CD8-positive, alpha-beta T cell (primary cell): ENCODE measurements at regions of chr2 and their contacts with region 1.

Region 1: GRCh38 chr2:157032017-157032416 is 225.5 kb upstream of the GALNT5 start:
- DNase-seq: no peak
- ATAC-seq: no peak
- H3K4me3 ChIP-seq: no peak overlapping the region
- H3K4me3 Mint-ChIP-seq: no peak overlapping the region
- H3K27ac ChIP-seq: no peak overlapping the region
- H3K27ac Mint-ChIP-seq: no peak overlapping the region
- H3K4me1 ChIP-seq: no peaks in the 10 kb centered on the region
- H3K4me1 Mint-ChIP-seq: no peaks in the 10 kb centered on the region
- H3K27me3 ChIP-seq: no peaks in the 10 kb centered on the region
- H3K27me3 Mint-ChIP-seq: no peaks in the 10 kb centered on the region
- CTCF ChIP-seq: no peak

Region 2: GRCh38 chr2:156826341-156826933 is 205.6 kb before region 1 on chr2:
- CTCF ChIA-PET with region 1: no interaction called
- POLR2A ChIA-PET with region 1: no interaction called
- intact Hi-C with region 1: no loop called
- DNase-seq: no peak
- ATAC-seq: no peak
- H3K4me3 ChIP-seq: no peak overlapping the region
- H3K4me3 Mint-ChIP-seq: no peak overlapping the region
- H3K27ac ChIP-seq: no peak overlapping the region
- H3K27ac Mint-ChIP-seq: no peak overlapping the region
- H3K4me1 ChIP-seq: no peaks in the 10 kb centered on the region
- H3K4me1 Mint-ChIP-seq: no peaks in the 10 kb centered on the region
- H3K27me3 ChIP-seq: no peaks in the 10 kb centered on the region
- H3K27me3 Mint-ChIP-seq: no peaks in the 10 kb centered on the region
- CTCF ChIP-seq: no peak

Region 3: DNA sequence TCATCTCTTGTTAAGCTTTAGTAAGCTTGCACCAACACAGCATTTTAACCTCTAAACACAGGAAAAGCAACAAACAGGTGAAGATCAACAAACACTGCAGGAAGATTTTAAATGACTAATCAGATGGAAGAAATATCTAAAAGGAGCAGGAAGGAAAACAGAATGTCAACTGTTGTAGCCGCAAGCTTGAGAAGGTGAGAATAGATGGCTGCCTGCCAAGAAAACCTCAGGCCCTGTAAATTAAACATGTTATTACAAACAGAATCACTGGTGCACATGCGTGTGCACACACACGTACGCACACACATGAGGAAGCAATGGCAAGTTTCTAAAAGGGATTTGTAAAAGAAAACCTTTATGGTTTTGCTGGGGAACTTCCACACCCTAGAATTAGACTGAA is 32.4 kb before region 1 on chr2:
- CTCF ChIA-PET with region 1: no interaction called
- POLR2A ChIA-PET with region 1: no interaction called
- intact Hi-C with region 1: loop called in 1 of 2 experiments (anchors 1 kb)
- DNase-seq: no peak
- ATAC-seq: no peak
- H3K4me3 ChIP-seq: no peak overlapping the region
- H3K4me3 Mint-ChIP-seq: no peak overlapping the region
- H3K27ac ChIP-seq: no peak overlapping the region
- H3K27ac Mint-ChIP-seq: no peak overlapping the region
- H3K4me1 ChIP-seq: no peaks in the 10 kb centered on the region
- H3K4me1 Mint-ChIP-seq: no peaks in the 10 kb centered on the region
- H3K27me3 ChIP-seq: no peaks in the 10 kb centered on the region
- H3K27me3 Mint-ChIP-seq: no peaks in the 10 kb centered on the region
- CTCF ChIP-seq: no peak

Region 4: DNA sequence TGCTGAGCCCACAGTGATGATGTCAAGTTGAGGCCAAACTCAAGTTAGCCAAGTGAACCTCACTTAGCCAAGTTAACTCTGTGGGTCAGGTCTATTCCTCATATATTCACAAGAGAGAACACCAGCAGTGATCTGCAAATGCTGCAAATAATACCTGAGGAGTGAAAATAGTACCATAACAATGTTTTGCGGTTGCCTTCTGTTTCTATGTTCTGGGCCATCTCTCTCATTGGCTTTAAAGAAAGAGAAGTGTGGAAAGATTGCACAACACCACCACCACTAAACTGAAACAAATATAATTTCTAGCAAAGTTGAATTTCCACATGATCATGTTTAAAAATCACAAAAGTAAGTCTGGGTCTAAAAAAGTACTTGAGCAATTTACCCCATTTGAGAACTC is 14.4 kb after region 1 on chr2:
- CTCF ChIA-PET with region 1: no interaction called
- POLR2A ChIA-PET with region 1: interaction called, 10 read pairs
- intact Hi-C with region 1: no loop called
- DNase-seq: no peak
- ATAC-seq: no peak
- H3K4me3 ChIP-seq: no peak overlapping the region
- H3K4me3 Mint-ChIP-seq: no peak overlapping the region
- H3K27ac ChIP-seq: no peak overlapping the region
- H3K27ac Mint-ChIP-seq: no peak overlapping the region
- H3K4me1 ChIP-seq: no peaks in the 10 kb centered on the region
- H3K4me1 Mint-ChIP-seq: no peaks in the 10 kb centered on the region
- H3K27me3 ChIP-seq: no peaks in the 10 kb centered on the region
- H3K27me3 Mint-ChIP-seq: no peaks in the 10 kb centered on the region
- CTCF ChIP-seq: no peak